CD8-positive, alpha-beta T cell (primary cell): ENCODE measurements at regions of chr12 and their contacts with region 1.

Region 1: GRCh38 chr12:112005419-112006395 is 7.3 kb downstream of the TMEM116 start:
- DNase-seq: no peak
- ATAC-seq: no peak
- H3K4me3 ChIP-seq: no peak overlapping the region
- H3K4me3 Mint-ChIP-seq: no peak overlapping the region
- H3K27ac ChIP-seq: peak overlapping the region in 1 of 2 experiments; percentile 41
- H3K27ac Mint-ChIP-seq: peak overlapping the region; percentile 37
- H3K4me1 ChIP-seq: peaks cover 33% of the 10 kb centered on the region
- H3K4me1 Mint-ChIP-seq: peaks cover 55% of the 10 kb centered on the region
- H3K27me3 ChIP-seq: no peaks in the 10 kb centered on the region
- H3K27me3 Mint-ChIP-seq: no peaks in the 10 kb centered on the region
- CTCF ChIP-seq: no peak

Region 2: GRCh38 chr12:111434680-111435338 is 570.9 kb before region 1 on chr12:
- CTCF ChIA-PET with region 1: no interaction called
- POLR2A ChIA-PET with region 1: no interaction called
- intact Hi-C with region 1: loop called in 1 of 2 experiments (anchors 10 kb)
- DNase-seq: peak; percentile 70 to 96 (median 87)
- ATAC-seq: peak; percentile 70
- H3K4me3 ChIP-seq: peak overlapping the region; percentile 34 to 39
- H3K4me3 Mint-ChIP-seq: peak overlapping the region; percentile 82
- H3K27ac ChIP-seq: peak overlapping the region; percentile 91 to 98
- H3K27ac Mint-ChIP-seq: peak overlapping the region; percentile 100
- H3K4me1 ChIP-seq: peaks cover 99% of the 10 kb centered on the region
- H3K4me1 Mint-ChIP-seq: peaks cover 93% of the 10 kb centered on the region
- H3K27me3 ChIP-seq: no peaks in the 10 kb centered on the region
- H3K27me3 Mint-ChIP-seq: no peaks in the 10 kb centered on the region
- CTCF ChIP-seq: no peak

Region 3: GRCh38 chr12:111953455-111953854 is 52.3 kb before region 1 on chr12:
- CTCF ChIA-PET with region 1: no interaction called
- POLR2A ChIA-PET with region 1: no interaction called
- intact Hi-C with region 1: no loop called
- DNase-seq: no peak
- ATAC-seq: no peak
- H3K4me3 ChIP-seq: no peak overlapping the region
- H3K4me3 Mint-ChIP-seq: no peak overlapping the region
- H3K27ac ChIP-seq: no peak overlapping the region
- H3K27ac Mint-ChIP-seq: no peak overlapping the region
- H3K4me1 ChIP-seq: peaks cover 9% of the 10 kb centered on the region
- H3K4me1 Mint-ChIP-seq: peaks cover 20% of the 10 kb centered on the region
- H3K27me3 ChIP-seq: no peaks in the 10 kb centered on the region
- H3K27me3 Mint-ChIP-seq: no peaks in the 10 kb centered on the region
- CTCF ChIP-seq: no peak

Region 4: GRCh38 chr12:111964935-111965334 is 40.8 kb before region 1 on chr12:
- CTCF ChIA-PET with region 1: no interaction called
- POLR2A ChIA-PET with region 1: no interaction called
- intact Hi-C with region 1: no loop called
- DNase-seq: no peak
- ATAC-seq: no peak
- H3K4me3 ChIP-seq: no peak overlapping the region
- H3K4me3 Mint-ChIP-seq: no peak overlapping the region
- H3K27ac ChIP-seq: no peak overlapping the region
- H3K27ac Mint-ChIP-seq: no peak overlapping the region
- H3K4me1 ChIP-seq: no peaks in the 10 kb centered on the region
- H3K4me1 Mint-ChIP-seq: peaks cover 13% of the 10 kb centered on the region
- H3K27me3 ChIP-seq: no peaks in the 10 kb centered on the region
- H3K27me3 Mint-ChIP-seq: no peaks in the 10 kb centered on the region
- CTCF ChIP-seq: no peak

Region 5: DNA sequence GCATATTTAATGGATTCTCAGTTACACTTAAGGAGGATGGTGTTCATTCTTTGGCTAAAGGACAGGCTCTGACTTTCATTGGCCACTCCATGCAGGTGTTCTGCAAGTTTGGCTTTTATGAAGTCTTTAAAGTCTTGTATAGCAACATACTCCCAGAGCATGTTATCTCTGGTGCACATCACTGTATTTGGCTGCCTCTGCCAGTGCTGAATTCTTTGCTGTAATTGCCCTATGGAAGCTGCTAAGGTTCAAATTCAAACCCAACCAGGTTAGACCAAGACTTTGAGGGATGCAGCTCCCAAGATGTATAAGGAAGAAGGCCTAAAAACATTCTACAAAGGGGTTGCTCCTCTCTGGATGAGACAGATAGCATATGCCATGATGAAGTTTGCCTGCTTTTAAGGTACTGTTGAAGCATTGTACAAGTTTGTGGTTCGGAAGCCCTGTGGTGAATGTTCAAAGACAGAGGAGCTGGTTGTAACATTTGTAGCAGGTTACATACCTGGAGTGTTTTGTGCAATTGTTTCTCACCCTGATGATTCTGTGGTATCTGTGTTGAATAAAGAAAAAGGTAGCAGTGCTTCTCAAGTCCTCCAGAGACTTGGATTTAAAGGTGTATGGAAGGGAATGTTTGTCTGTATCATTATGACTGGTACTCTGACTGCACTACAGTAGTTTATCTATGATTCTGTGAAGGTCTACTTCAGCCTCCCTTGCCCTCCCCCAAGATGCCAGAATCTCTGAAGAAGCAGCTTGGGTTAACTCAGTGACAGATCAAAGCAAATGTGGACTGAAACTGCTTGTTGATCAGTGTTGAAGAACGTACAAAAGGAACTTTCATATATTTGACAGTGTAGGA is 12.2 kb before region 1 on chr12:
- CTCF ChIA-PET with region 1: interaction called, 3 read pairs
- POLR2A ChIA-PET with region 1: interaction called, 7 read pairs
- intact Hi-C with region 1: loop called in 1 of 2 experiments (anchors 1 kb)
- DNase-seq: peak in 6 of 9 experiments; percentile 29 to 73 (median 54)
- ATAC-seq: peak; percentile 80
- H3K4me3 ChIP-seq: peak overlapping the region; percentile 43 to 53
- H3K4me3 Mint-ChIP-seq: peak overlapping the region; percentile 84
- H3K27ac ChIP-seq: peak overlapping the region; percentile 36 to 74
- H3K27ac Mint-ChIP-seq: peak overlapping the region; percentile 91
- H3K4me1 ChIP-seq: peaks cover 70% of the 10 kb centered on the region
- H3K4me1 Mint-ChIP-seq: peaks cover 72% of the 10 kb centered on the region
- H3K27me3 ChIP-seq: no peaks in the 10 kb centered on the region
- H3K27me3 Mint-ChIP-seq: no peaks in the 10 kb centered on the region
- CTCF ChIP-seq: no peak

Region 6: GRCh38 chr12:112116232-112117060 is 110.7 kb after region 1 on chr12:
- CTCF ChIA-PET with region 1: no interaction called
- POLR2A ChIA-PET with region 1: no interaction called
- intact Hi-C with region 1: no loop called
- DNase-seq: peak in 1 of 9 experiments; percentile 37
- ATAC-seq: no peak
- H3K4me3 ChIP-seq: no peak overlapping the region
- H3K4me3 Mint-ChIP-seq: no peak overlapping the region
- H3K27ac ChIP-seq: no peak overlapping the region
- H3K27ac Mint-ChIP-seq: no peak overlapping the region
- H3K4me1 ChIP-seq: peaks cover 9% of the 10 kb centered on the region
- H3K4me1 Mint-ChIP-seq: peaks cover 7% of the 10 kb centered on the region
- H3K27me3 ChIP-seq: no peaks in the 10 kb centered on the region
- H3K27me3 Mint-ChIP-seq: no peaks in the 10 kb centered on the region
- CTCF ChIP-seq: no peak

Region 7: GRCh38 chr12:112214064-112214463 is 208.4 kb after region 1 on chr12:
- CTCF ChIA-PET with region 1: no interaction called
- POLR2A ChIA-PET with region 1: no interaction called
- intact Hi-C with region 1: no loop called
- DNase-seq: no peak
- ATAC-seq: no peak
- H3K4me3 ChIP-seq: no peak overlapping the region
- H3K4me3 Mint-ChIP-seq: no peak overlapping the region
- H3K27ac ChIP-seq: no peak overlapping the region
- H3K27ac Mint-ChIP-seq: no peak overlapping the region
- H3K4me1 ChIP-seq: no peaks in the 10 kb centered on the region
- H3K4me1 Mint-ChIP-seq: no peaks in the 10 kb centered on the region
- H3K27me3 ChIP-seq: no peaks in the 10 kb centered on the region
- H3K27me3 Mint-ChIP-seq: no peaks in the 10 kb centered on the region
- CTCF ChIP-seq: no peak